GM10248 (cell line): ENCODE measurements at regions of chr3 and their contacts with region 1.

Region 1: GRCh38 chr3:101709126-101709525 is 15.3 kb upstream of the CEP97 start:
- DNase-seq: no peak
- CTCF ChIP-seq: no peak

Region 2: GRCh38 chr3:101719604-101720185 is 10.6 kb after region 1 on chr3:
- CTCF ChIA-PET with region 1: interaction called, 20 read pairs
- POLR2A ChIA-PET with region 1: interaction called, 3 read pairs
- DNase-seq: no peak
- CTCF ChIP-seq: no peak